ENCODE measurements at regions of chr7 and their contacts with region 1.

Region 1: DNA sequence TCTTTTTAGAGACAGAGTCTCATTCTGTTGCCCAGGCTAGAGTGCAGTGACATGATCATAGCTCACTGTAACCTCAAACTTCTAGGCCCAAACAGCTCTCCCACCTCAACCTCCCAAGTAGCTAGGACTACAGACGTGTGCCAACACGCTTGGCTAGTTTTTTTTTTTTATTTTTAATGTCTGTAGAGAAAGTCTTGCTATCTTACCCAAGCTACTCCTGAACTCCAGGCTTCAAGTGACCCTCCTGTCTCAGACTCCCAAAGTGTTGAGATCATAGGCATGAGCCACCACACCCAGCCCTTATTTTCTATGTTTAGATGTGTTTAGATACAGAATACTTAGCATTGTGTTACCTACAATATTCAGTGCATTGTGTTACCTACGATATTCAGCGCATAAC is 46.4 kb downstream of the KMT2E start:
- DNase-seq: no peak
- ATAC-seq: peak in 1 of 3 donors; percentile 13
- H3K4me3 ChIP-seq: no peak overlapping the region
- H3K4me3 Mint-ChIP-seq: no peak overlapping the region
- H3K27ac ChIP-seq: no peak overlapping the region
- H3K27ac Mint-ChIP-seq: peak overlapping the region; percentile 9 to 75
- H3K4me1 ChIP-seq: no peaks in the 10 kb centered on the region
- H3K4me1 Mint-ChIP-seq: peaks cover 61 to 76% of the 10 kb centered on the region in 2 donors
- H3K27me3 ChIP-seq: no peaks in the 10 kb centered on the region
- H3K27me3 Mint-ChIP-seq: no peaks in the 10 kb centered on the region
- CTCF ChIP-seq: no peak

Region 2: GRCh38 chr7:104993217-104993862 is 67.1 kb before region 1 on chr7:
- intact Hi-C with region 1: no loop called
- DNase-seq: no peak
- ATAC-seq: peak in 2 of 3 donors; percentile 37 to 44
- H3K4me3 ChIP-seq: no peak overlapping the region
- H3K4me3 Mint-ChIP-seq: no peak overlapping the region
- H3K27ac ChIP-seq: no peak overlapping the region
- H3K27ac Mint-ChIP-seq: peak overlapping the region; percentile 44 to 63
- H3K4me1 ChIP-seq: peaks cover 12% of the 10 kb centered on the region
- H3K4me1 Mint-ChIP-seq: peaks cover 49 to 50% of the 10 kb centered on the region in 2 donors
- H3K27me3 ChIP-seq: no peaks in the 10 kb centered on the region
- H3K27me3 Mint-ChIP-seq: no peaks in the 10 kb centered on the region
- CTCF ChIP-seq: no peak

Region 3: GRCh38 chr7:105024743-105025142 is 35.7 kb before region 1 on chr7:
- intact Hi-C with region 1: loop called (anchors 5 kb)
- DNase-seq: no peak
- ATAC-seq: no peak
- H3K4me3 ChIP-seq: no peak overlapping the region
- H3K4me3 Mint-ChIP-seq: peak overlapping the region; percentile 57
- H3K27ac ChIP-seq: no peak overlapping the region
- H3K27ac Mint-ChIP-seq: peak overlapping the region; percentile 65 to 84
- H3K4me1 ChIP-seq: peaks cover 36% of the 10 kb centered on the region
- H3K4me1 Mint-ChIP-seq: peaks cover 79 to 86% of the 10 kb centered on the region in 2 donors
- H3K27me3 ChIP-seq: no peaks in the 10 kb centered on the region
- H3K27me3 Mint-ChIP-seq: no peaks in the 10 kb centered on the region
- CTCF ChIP-seq: no peak

Region 4: DNA sequence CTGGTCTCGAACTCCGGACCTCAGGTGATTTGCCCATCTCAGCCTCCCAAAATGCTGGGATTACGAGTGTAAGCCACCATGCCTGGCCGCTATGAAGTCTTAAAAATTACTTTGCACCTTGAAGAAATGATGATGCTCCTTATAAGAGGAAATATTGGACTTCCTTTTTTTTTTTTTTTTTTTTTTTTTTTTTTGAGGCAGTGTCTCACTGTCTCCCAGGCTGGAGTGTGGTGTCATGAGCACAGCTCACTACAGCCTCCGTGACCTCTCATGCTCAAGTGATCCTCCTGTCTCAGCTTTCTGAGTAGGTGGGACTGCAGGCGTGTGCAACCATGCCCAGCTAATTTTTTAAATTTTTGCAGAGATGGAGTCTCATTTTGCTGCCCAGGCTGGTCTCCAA is 18.9 kb after region 1 on chr7:
- intact Hi-C with region 1: loop called (anchors 1 kb)
- DNase-seq: no peak
- ATAC-seq: peak in 1 of 3 donors; percentile 31
- H3K4me3 ChIP-seq: no peak overlapping the region
- H3K4me3 Mint-ChIP-seq: no peak overlapping the region
- H3K27ac ChIP-seq: no peak overlapping the region
- H3K27ac Mint-ChIP-seq: no peak overlapping the region
- H3K4me1 ChIP-seq: no peaks in the 10 kb centered on the region
- H3K4me1 Mint-ChIP-seq: peaks cover 13 to 15% of the 10 kb centered on the region in 2 donors
- H3K27me3 ChIP-seq: no peaks in the 10 kb centered on the region
- H3K27me3 Mint-ChIP-seq: no peaks in the 10 kb centered on the region
- CTCF ChIP-seq: no peak

Measured in natural killer cell (primary cell).